T-cell (primary cell): ENCODE measurements at regions of chr5 and their contacts with region 1.

Region 1: GRCh38 chr5:142888469-142889085 is 118.4 kb downstream of the ARHGAP26 start:
- DNase-seq: peak in 3 of 35 experiments; percentile 8 to 54 (median 13)
- ATAC-seq: peak in 2 of 4 experiments; percentile 32 to 40
- H3K4me3 ChIP-seq: no peak overlapping the region
- H3K4me3 Mint-ChIP-seq: no peak overlapping the region
- H3K27ac ChIP-seq: no peak overlapping the region
- H3K27ac Mint-ChIP-seq: no peak overlapping the region
- H3K4me1 ChIP-seq: no peaks in the 10 kb centered on the region
- H3K4me1 Mint-ChIP-seq: peaks cover 15 to 19% (median 18%) of the 10 kb centered on the region in 3 donors
- H3K27me3 ChIP-seq: no peaks in the 10 kb centered on the region
- H3K27me3 Mint-ChIP-seq: no peaks in the 10 kb centered on the region

Region 2: DNA sequence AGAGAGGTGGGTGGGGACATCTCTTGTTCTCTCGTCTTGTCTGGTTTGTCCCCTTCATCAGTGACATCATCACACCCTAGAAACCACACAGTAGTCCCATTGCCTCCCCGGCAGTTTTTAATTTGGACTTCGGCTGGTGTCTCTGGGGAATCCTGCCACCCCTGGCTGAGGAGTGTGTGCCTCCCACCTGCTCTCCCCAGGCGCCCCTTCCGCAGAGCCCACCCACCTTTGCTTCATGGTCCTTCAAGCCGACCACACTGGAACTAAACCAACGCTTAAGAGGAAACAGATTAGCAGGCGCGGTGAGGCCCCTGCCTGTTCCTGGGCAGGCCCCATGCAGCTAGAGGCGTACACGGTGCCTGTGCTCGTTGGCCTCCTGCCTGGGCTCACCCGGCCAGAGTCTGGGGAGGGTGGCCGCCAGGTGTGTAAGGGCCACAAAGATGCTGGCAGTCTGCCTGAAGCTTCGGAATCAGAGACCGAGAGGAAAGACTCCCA is 456.2 kb before region 1 on chr5:
- CTCF ChIA-PET with region 1: no interaction called
- POLR2A ChIA-PET with region 1: no interaction called
- DNase-seq: peak in 25 of 35 experiments; percentile 6 to 55 (median 20)
- ATAC-seq: peak; percentile 59 to 72 (median 64)
- H3K4me3 ChIP-seq: peak overlapping the region in 1 of 2 donors; percentile 10
- H3K4me3 Mint-ChIP-seq: peak overlapping the region in 2 of 3 donors; percentile 53 to 68
- H3K27ac ChIP-seq: peak overlapping the region; percentile 83
- H3K27ac Mint-ChIP-seq: peak overlapping the region; percentile 81 to 92
- H3K4me1 ChIP-seq: peaks cover 15 to 44% of the 10 kb centered on the region in 2 experiments
- H3K4me1 Mint-ChIP-seq: peaks cover 36 to 47% (median 39%) of the 10 kb centered on the region in 3 donors
- H3K27me3 ChIP-seq: no peaks in the 10 kb centered on the region
- H3K27me3 Mint-ChIP-seq: no peaks in the 10 kb centered on the region

Region 3: DNA sequence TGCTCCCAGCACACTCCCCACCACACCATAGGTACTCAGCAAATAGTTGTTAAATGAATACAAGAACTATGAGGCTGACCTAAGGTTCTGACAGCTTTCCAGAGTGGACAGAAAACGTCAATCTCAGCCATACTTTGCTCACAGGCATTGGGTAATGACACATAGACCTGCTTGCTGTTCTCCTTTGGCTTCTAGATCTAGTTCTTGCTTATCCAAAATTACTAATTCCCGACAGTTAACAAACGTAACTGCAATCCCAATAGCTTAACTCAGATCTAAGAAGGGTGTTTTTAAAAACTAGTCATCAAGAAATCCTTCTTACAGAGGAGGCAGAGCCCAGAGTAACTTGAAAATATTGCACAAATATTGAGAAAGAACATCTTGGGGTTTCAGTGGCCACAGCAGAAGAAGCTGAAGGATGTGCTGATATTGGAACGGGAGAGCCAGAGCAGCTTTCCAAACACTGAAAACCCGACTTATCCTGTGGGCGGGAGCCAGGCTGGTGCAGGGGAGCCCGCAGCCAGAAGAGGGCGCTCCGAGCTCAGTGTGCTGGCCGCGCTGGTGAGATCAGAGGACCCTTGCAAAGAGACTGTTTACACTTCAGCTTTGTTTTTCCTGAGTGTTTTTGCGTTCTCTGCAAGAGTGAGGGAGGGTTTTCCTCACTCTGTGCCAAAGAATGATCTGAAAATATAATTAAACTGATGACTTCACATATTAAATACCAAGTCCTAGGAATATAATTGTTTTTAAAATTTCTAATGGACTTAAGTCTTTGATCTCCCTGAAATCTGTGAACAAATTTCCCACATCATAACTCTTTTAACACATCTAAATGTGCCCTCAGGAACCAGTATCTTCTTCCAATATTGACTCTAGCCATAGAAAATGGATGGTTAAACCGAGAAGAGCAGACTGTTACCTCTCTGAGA is 233.0 kb before region 1 on chr5:
- CTCF ChIA-PET with region 1: interaction called, 4 to 10 read pairs
- POLR2A ChIA-PET with region 1: no interaction called
- DNase-seq: peak; percentile 20 to 78 (median 58)
- ATAC-seq: peak; percentile 81 to 88 (median 84)
- H3K4me3 ChIP-seq: no peak overlapping the region
- H3K4me3 Mint-ChIP-seq: no peak overlapping the region
- H3K27ac ChIP-seq: no peak overlapping the region
- H3K27ac Mint-ChIP-seq: no peak overlapping the region
- H3K4me1 ChIP-seq: peaks cover 0 to 4% of the 10 kb centered on the region in 2 experiments
- H3K4me1 Mint-ChIP-seq: peaks cover 4 to 8% (median 6%) of the 10 kb centered on the region in 3 donors
- H3K27me3 ChIP-seq: peaks cover 3 to 24% of the 10 kb centered on the region in 2 experiments
- H3K27me3 Mint-ChIP-seq: peaks cover 13 to 31% of the 10 kb centered on the region in 2 donors

Region 4: GRCh38 chr5:142969624-142970439 is 81.3 kb after region 1 on chr5:
- CTCF ChIA-PET with region 1: no interaction called
- POLR2A ChIA-PET with region 1: no interaction called
- DNase-seq: no peak
- ATAC-seq: peak in 1 of 4 experiments; percentile 37
- H3K4me3 ChIP-seq: no peak overlapping the region
- H3K4me3 Mint-ChIP-seq: no peak overlapping the region
- H3K27ac ChIP-seq: peak overlapping the region; percentile 21
- H3K27ac Mint-ChIP-seq: peak overlapping the region; percentile 75 to 76
- H3K4me1 ChIP-seq: peaks cover 0 to 22% of the 10 kb centered on the region in 2 experiments
- H3K4me1 Mint-ChIP-seq: peaks cover 19 to 49% (median 38%) of the 10 kb centered on the region in 3 donors
- H3K27me3 ChIP-seq: no peaks in the 10 kb centered on the region
- H3K27me3 Mint-ChIP-seq: no peaks in the 10 kb centered on the region